Activated CD4-positive, alpha-beta T cell treated with anti-CD3 and anti-CD28 coated beads, Interleukin-2, amount 10 ng/mL, durations not matched to agents 24 days and 14 days (primary cell): ENCODE measurements at regions of chr19 and their contacts with region 1.

Region 1: GRCh38 chr19:53195265-53195903 is 2.2 kb upstream of the ZNF665 start:
- DNase-seq: peak; percentile 91
- H3K4me3 Mint-ChIP-seq: peak overlapping the region; percentile 13
- H3K27ac Mint-ChIP-seq: peak overlapping the region; percentile 9
- H3K4me1 Mint-ChIP-seq: peaks cover 30% of the 10 kb centered on the region
- H3K27me3 Mint-ChIP-seq: no peaks in the 10 kb centered on the region

Region 2: GRCh38 chr19:52993323-52994178 is 201.8 kb before region 1 on chr19:
- intact Hi-C with region 1: loop called (anchors 5 kb)
- DNase-seq: peak; percentile 95
- H3K4me3 Mint-ChIP-seq: peak overlapping the region; percentile 86
- H3K27ac Mint-ChIP-seq: no peak overlapping the region
- H3K4me1 Mint-ChIP-seq: peaks cover 8% of the 10 kb centered on the region
- H3K27me3 Mint-ChIP-seq: no peaks in the 10 kb centered on the region

Region 3: GRCh38 chr19:53158119-53158656 is 37.2 kb before region 1 on chr19:
- intact Hi-C with region 1: loop called (anchors 5 kb)
- DNase-seq: peak; percentile 75
- H3K4me3 Mint-ChIP-seq: peak overlapping the region; percentile 87
- H3K27ac Mint-ChIP-seq: peak overlapping the region; percentile 73
- H3K4me1 Mint-ChIP-seq: peaks cover 12% of the 10 kb centered on the region
- H3K27me3 Mint-ChIP-seq: no peaks in the 10 kb centered on the region

Region 4: GRCh38 chr19:53365134-53365898 is 169.9 kb after region 1 on chr19 and contains the start of gene ZNF525:
- intact Hi-C with region 1: loop called (anchors 1 kb)
- DNase-seq: peak; percentile 99
- H3K4me3 Mint-ChIP-seq: peak within 1 kb of the TSS; percentile 95
- H3K27ac Mint-ChIP-seq: peak within 1 kb of the TSS; percentile 95
- H3K4me1 Mint-ChIP-seq: peaks cover 15% of the 10 kb centered on the region
- H3K27me3 Mint-ChIP-seq: no peaks in the 10 kb centered on the region
- total RNA-seq, gene ZNF525: 18.3 and 19.4 TPM in 2 replicates

Region 5: GRCh38 chr19:53431399-53432087 is 236.2 kb after region 1 on chr19 and contains the start of gene ZNF761:
- intact Hi-C with region 1: loop called (anchors 10 kb)
- DNase-seq: peak; percentile 99
- H3K4me3 Mint-ChIP-seq: peak within 1 kb of the TSS; percentile 90
- H3K27ac Mint-ChIP-seq: peak within 1 kb of the TSS; percentile 93
- H3K4me1 Mint-ChIP-seq: peaks cover 16% of the 10 kb centered on the region
- H3K27me3 Mint-ChIP-seq: no peaks in the 10 kb centered on the region
- total RNA-seq, gene ZNF761: 9.8 and 11.6 TPM in 2 replicates

Region 6: GRCh38 chr19:53520550-53521372 is 325.4 kb after region 1 on chr19:
- intact Hi-C with region 1: loop called (anchors 5 kb)
- DNase-seq: peak; percentile 95
- H3K4me3 Mint-ChIP-seq: peak overlapping the region; percentile 100
- H3K27ac Mint-ChIP-seq: peak overlapping the region; percentile 94
- H3K4me1 Mint-ChIP-seq: peaks cover 14% of the 10 kb centered on the region
- H3K27me3 Mint-ChIP-seq: no peaks in the 10 kb centered on the region